HCT116 (cell line): ENCODE measurements at regions of chr3 and their contacts with region 1.

Region 1: GRCh38 chr3:57169872-57170623 is 4.9 kb upstream of the IL17RD start:
- DNase-seq: peak; percentile 64
- ATAC-seq: peak; percentile 88
- H3K4me3 ChIP-seq: peak overlapping the region; percentile 52 to 63
- H3K27ac ChIP-seq: peak overlapping the region; percentile 18; the same call in 1 of the 2 replicates
- H3K4me1 ChIP-seq: peaks cover 3 to 20% of the 10 kb centered on the region in 2 experiments; a peak in 3 of 4 replicates
- H3K27me3 ChIP-seq: no peaks in the 10 kb centered on the region
- CTCF ChIP-seq: peak; percentile 78 to 85 (median 78)
- POLR2A ChIP-seq: no peak
- RAD21 ChIP-seq: peak; percentile 95

Region 2: GRCh38 chr3:56801662-56802377 is 368.2 kb before region 1 on chr3 and contains the start of gene ARHGEF3:
- CTCF ChIA-PET with region 1: no interaction called
- POLR2A ChIA-PET with region 1: no interaction called
- RAD21 ChIA-PET with region 1: no interaction called
- intact Hi-C with region 1: no loop called
- DNase-seq: peak; percentile 72
- ATAC-seq: peak; percentile 93
- H3K4me3 ChIP-seq: peak within 1 kb of the TSS; percentile 41 to 64
- H3K27ac ChIP-seq: peak within 1 kb of the TSS; percentile 45; the same call in 1 of the 2 replicates
- H3K4me1 ChIP-seq: peaks cover 16 to 27% of the 10 kb centered on the region in 2 experiments
- H3K27me3 ChIP-seq: no peaks in the 10 kb centered on the region
- CTCF ChIP-seq: peak; percentile 46 to 77 (median 64)
- POLR2A ChIP-seq: peak; percentile 57
- RAD21 ChIP-seq: peak; percentile 59
- total RNA-seq, gene ARHGEF3: 18.1 TPM

Region 3: GRCh38 chr3:56997675-56998074 is 172.4 kb before region 1 on chr3:
- CTCF ChIA-PET with region 1: no interaction called
- POLR2A ChIA-PET with region 1: no interaction called
- RAD21 ChIA-PET with region 1: no interaction called
- intact Hi-C with region 1: loop called (anchors 5 kb)
- DNase-seq: no peak
- ATAC-seq: no peak
- H3K4me3 ChIP-seq: no peak overlapping the region
- H3K27ac ChIP-seq: no peak overlapping the region
- H3K4me1 ChIP-seq: peaks cover 0 to 8% of the 10 kb centered on the region in 2 experiments; a peak in 2 of 4 replicates
- H3K27me3 ChIP-seq: no peaks in the 10 kb centered on the region
- CTCF ChIP-seq: no peak
- POLR2A ChIP-seq: no peak
- RAD21 ChIP-seq: no peak

Region 4: DNA sequence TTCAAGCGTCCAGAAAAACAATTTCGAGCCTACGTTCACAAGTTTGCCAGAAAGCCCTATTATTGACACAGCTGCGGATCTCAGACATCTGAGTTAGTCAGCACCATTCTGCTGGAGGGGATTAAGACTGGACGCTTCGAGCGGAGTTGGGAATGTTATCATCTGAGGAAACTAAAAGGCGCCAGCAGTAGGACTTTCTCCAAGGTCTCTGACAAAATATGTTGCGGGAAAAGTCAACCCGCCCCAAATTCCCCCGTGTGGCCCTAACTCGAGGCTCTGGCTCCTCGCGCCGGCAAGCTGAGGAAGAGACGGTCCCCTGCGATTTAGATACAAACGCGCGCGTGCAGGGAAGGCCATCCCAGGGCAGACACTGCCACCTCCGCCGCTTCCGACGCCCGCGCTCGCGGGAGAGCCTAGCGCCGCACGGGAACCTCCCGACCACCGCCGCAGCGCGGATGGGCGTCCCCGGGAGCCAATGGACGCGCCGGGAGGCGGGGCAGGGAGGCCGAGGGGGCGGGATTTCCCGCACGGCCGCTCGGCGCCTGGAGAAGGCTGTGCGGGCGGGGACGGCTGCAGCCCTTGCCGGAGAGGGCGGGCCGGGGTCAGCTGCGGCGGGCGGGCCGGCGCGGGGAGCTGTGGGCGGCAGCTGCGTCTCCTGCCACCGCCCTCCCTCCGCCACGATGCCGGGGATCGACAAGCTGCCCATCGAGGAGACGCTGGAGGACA is 57.3 kb after region 1 on chr3 and contains the start of gene APPL1:
- CTCF ChIA-PET with region 1: no interaction called
- POLR2A ChIA-PET with region 1: interaction called, 3 read pairs
- RAD21 ChIA-PET with region 1: no interaction called
- intact Hi-C with region 1: loop called (anchors 5 kb)
- DNase-seq: peak; percentile 75
- ATAC-seq: peak; percentile 95
- H3K4me3 ChIP-seq: peak within 1 kb of the TSS; percentile 70 to 83
- H3K27ac ChIP-seq: peak within 1 kb of the TSS; percentile 81
- H3K4me1 ChIP-seq: peaks cover 4 to 25% of the 10 kb centered on the region in 2 experiments
- H3K27me3 ChIP-seq: no peaks in the 10 kb centered on the region
- CTCF ChIP-seq: no peak
- POLR2A ChIP-seq: peak; percentile 83
- RAD21 ChIP-seq: no peak
- total RNA-seq, gene APPL1: 30.8 TPM

Region 5: GRCh38 chr3:57350271-57350670 is 180.2 kb after region 1 on chr3:
- CTCF ChIA-PET with region 1: no interaction called
- POLR2A ChIA-PET with region 1: no interaction called
- RAD21 ChIA-PET with region 1: no interaction called
- intact Hi-C with region 1: no loop called
- DNase-seq: no peak
- ATAC-seq: no peak
- H3K4me3 ChIP-seq: no peak overlapping the region
- H3K27ac ChIP-seq: no peak overlapping the region
- H3K4me1 ChIP-seq: no peaks in the 10 kb centered on the region
- H3K27me3 ChIP-seq: no peaks in the 10 kb centered on the region
- CTCF ChIP-seq: no peak
- POLR2A ChIP-seq: no peak
- RAD21 ChIP-seq: no peak

Region 6: GRCh38 chr3:57434041-57434440 is 264.0 kb after region 1 on chr3:
- CTCF ChIA-PET with region 1: interaction called, 3 read pairs
- POLR2A ChIA-PET with region 1: no interaction called
- RAD21 ChIA-PET with region 1: no interaction called
- intact Hi-C with region 1: loop called (anchors 1 kb)
- DNase-seq: peak; percentile 62
- ATAC-seq: peak; percentile 96
- H3K4me3 ChIP-seq: no peak overlapping the region
- H3K27ac ChIP-seq: no peak overlapping the region
- H3K4me1 ChIP-seq: no peaks in the 10 kb centered on the region
- H3K27me3 ChIP-seq: no peaks in the 10 kb centered on the region
- CTCF ChIP-seq: peak; percentile 53 to 64 (median 63); a peak in 5 of 6 replicates
- POLR2A ChIP-seq: no peak
- RAD21 ChIP-seq: peak; percentile 70

Region 7: DNA sequence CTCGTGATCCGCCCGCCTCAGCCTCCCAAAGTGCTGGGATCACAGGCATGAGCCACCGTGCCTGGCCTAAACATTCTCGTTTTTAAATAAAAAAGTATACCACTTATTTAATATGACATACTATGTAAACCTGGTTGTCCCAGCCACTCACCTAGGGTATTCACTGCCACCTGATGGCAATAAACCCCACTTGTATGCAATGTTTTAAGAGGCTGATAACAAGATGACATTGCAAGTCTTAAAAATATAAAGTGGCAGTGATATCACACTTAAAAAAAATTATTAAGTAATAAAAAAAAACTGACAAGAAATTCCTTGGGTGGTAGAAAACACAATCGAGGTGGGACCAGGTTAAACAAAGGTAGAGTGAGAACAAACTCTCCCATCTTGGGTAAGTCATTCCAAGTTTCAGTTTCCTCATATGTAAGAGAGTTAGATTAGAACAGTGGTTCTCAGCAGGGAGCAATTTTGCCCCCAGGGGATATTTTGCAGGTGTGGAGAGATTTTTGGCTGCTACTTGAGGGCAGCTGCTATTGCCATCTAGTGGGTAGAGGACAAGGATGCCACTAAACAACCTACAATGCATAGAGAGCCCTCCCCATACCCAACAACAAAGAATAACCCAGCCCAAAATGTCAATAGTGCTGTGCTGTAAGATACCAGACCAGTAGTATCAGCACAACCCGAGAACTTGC is 412.6 kb after region 1 on chr3:
- CTCF ChIA-PET with region 1: no interaction called
- POLR2A ChIA-PET with region 1: no interaction called
- RAD21 ChIA-PET with region 1: interaction called in 1 of 2 experiments, 4 read pairs
- intact Hi-C with region 1: loop called (anchors 10 kb)
- DNase-seq: peak; percentile 24
- ATAC-seq: peak; percentile 82
- H3K4me3 ChIP-seq: no peak overlapping the region
- H3K27ac ChIP-seq: no peak overlapping the region
- H3K4me1 ChIP-seq: peaks cover 0 to 5% of the 10 kb centered on the region in 2 experiments; a peak in 1 of 4 replicates
- H3K27me3 ChIP-seq: no peaks in the 10 kb centered on the region
- CTCF ChIP-seq: peak; percentile 14 to 60 (median 54); a peak in 4 of 6 replicates
- POLR2A ChIP-seq: no peak
- RAD21 ChIP-seq: peak; percentile 44

Region 8: GRCh38 chr3:57852896-57853295 is 682.8 kb after region 1 on chr3:
- CTCF ChIA-PET with region 1: no interaction called
- POLR2A ChIA-PET with region 1: no interaction called
- RAD21 ChIA-PET with region 1: no interaction called
- intact Hi-C with region 1: loop called (anchors 10 kb)
- DNase-seq: no peak
- ATAC-seq: no peak
- H3K4me3 ChIP-seq: no peak overlapping the region
- H3K27ac ChIP-seq: no peak overlapping the region
- H3K4me1 ChIP-seq: no peaks in the 10 kb centered on the region
- H3K27me3 ChIP-seq: no peaks in the 10 kb centered on the region
- CTCF ChIP-seq: peak in 2 of 3 experiments; percentile 25 to 48; a peak in 3 of 6 replicates
- POLR2A ChIP-seq: no peak
- RAD21 ChIP-seq: peak; percentile 58